AG04450 (cell line): ENCODE measurements at regions of chr17 and their contacts with region 1.

Region 1: DNA sequence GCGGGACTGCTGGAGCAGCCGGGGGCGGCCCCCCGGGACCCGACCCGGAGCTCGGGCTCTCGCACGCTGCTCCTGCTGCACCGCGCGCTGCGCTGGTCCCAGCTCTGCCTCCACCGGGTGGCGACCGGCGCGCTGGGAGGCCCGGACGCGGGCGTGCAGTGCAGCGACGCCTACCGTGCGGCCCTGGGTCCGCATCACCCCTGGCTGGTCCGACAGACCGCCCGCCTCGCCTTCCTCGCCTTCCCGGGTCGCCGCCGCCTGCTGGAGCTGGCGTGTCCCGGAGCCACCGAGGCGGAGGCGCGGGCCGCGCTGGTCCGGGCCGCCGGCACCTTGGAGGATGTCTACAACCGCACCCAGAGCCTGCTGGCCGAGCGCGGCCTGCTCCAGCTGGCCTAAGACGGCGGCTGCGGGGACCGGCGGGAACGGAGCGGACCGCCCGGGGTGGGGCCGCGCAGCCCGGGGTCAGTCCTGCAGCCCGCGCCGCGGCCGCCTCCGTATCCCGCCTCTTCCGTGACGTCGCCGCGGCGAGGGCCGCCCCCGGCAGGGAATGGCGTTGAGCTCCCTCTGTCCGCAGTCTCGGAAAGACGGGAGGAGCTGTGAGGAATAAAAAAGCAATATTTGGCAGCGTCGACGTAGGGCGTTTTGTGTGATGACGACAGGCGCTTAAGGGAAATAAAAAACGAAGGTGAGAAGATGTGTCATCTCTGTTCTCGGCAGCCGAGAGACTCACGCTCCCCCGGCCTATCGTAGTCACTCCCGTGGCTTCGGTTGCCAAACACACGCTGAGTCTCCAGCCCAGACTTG is 1.3 kb downstream of the GLTPD2 start:
- DNase-seq: peak; percentile 69
- H3K4me3 ChIP-seq: peak overlapping the region; percentile 66
- H3K27ac ChIP-seq: peak overlapping the region; percentile 75
- H3K27me3 ChIP-seq: peaks cover 17% of the 10 kb centered on the region
- CTCF ChIP-seq: peak; percentile 66

Region 2: DNA sequence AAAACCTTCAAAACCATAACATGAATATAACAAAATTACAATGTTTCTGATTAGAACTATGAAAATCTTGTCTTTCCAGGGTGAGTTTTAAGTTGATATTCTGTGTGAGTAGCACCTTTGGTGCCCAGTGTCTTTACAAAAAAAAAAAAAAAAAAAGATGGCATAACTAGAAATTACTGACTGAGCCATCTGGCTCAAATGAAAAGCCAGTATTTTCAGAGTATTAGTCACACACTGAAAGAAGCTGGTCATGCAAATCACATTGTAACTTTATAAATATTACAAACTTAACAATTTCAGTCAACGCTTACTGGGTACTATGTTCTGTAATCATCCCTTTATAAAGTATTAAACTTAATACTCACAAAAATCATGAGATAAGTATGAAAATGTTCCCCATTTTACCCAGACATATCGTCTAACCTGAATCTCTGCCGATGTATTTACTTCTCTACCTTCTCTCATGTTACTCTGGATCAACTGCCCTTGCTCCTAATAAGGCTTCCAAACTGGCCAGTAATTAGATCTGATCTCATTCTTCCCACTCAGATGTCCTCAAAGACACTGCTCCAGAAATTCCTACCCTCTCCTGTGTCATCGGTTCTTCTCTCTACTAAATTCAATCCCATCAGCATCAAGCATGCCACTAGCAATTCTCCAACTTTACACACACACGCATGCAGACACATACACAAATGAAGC is 449.0 kb before region 1 on chr17:
- CTCF ChIA-PET with region 1: no interaction called
- POLR2A ChIA-PET with region 1: no interaction called
- DNase-seq: no peak
- H3K4me3 ChIP-seq: no peak overlapping the region
- H3K27ac ChIP-seq: no peak overlapping the region
- H3K27me3 ChIP-seq: no peaks in the 10 kb centered on the region
- CTCF ChIP-seq: no peak

Region 3: DNA sequence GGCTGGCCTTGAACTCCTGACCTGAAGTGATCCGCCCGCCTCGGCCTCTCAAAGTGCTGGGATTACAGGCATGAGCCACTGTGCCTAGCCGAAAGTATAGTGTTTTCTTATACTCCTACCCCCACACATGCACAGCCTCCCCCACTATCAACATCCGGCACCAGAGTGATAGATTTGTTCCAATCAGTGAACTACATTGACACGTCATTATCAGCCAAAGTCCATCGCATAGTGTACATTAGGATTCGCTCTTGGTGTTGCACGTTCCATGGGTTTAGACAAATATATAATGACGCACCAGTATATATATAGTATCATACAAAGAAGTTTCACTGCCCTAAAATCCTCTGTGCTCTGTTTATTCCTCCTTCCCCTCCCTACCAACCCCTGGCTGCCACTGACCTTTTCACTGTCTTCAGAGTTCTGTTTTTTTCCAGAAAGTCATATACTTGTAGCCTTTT is 30.3 kb before region 1 on chr17:
- CTCF ChIA-PET with region 1: interaction called, 11 read pairs
- POLR2A ChIA-PET with region 1: no interaction called
- DNase-seq: no peak
- H3K4me3 ChIP-seq: no peak overlapping the region
- H3K27ac ChIP-seq: no peak overlapping the region
- H3K27me3 ChIP-seq: peaks cover 22% of the 10 kb centered on the region
- CTCF ChIP-seq: no peak

Region 4: GRCh38 chr17:4777969-4778761 is 11.9 kb before region 1 on chr17:
- CTCF ChIA-PET with region 1: interaction called, 24 read pairs
- POLR2A ChIA-PET with region 1: interaction called, 4 read pairs
- DNase-seq: no peak
- H3K4me3 ChIP-seq: no peak overlapping the region
- H3K27ac ChIP-seq: no peak overlapping the region
- H3K27me3 ChIP-seq: peaks cover 48% of the 10 kb centered on the region
- CTCF ChIP-seq: no peak

Region 5: GRCh38 chr17:4870855-4871254 is 80.8 kb after region 1 on chr17:
- CTCF ChIA-PET with region 1: interaction called, 10 read pairs
- POLR2A ChIA-PET with region 1: no interaction called
- DNase-seq: no peak
- H3K4me3 ChIP-seq: no peak overlapping the region
- H3K27ac ChIP-seq: no peak overlapping the region
- H3K27me3 ChIP-seq: no peaks in the 10 kb centered on the region
- CTCF ChIP-seq: no peak

Region 6: GRCh38 chr17:4891411-4892342 is 101.6 kb after region 1 on chr17:
- CTCF ChIA-PET with region 1: interaction called, 46 read pairs
- POLR2A ChIA-PET with region 1: no interaction called
- DNase-seq: no peak
- H3K4me3 ChIP-seq: no peak overlapping the region
- H3K27ac ChIP-seq: no peak overlapping the region
- H3K27me3 ChIP-seq: no peaks in the 10 kb centered on the region
- CTCF ChIP-seq: no peak

Region 7: DNA sequence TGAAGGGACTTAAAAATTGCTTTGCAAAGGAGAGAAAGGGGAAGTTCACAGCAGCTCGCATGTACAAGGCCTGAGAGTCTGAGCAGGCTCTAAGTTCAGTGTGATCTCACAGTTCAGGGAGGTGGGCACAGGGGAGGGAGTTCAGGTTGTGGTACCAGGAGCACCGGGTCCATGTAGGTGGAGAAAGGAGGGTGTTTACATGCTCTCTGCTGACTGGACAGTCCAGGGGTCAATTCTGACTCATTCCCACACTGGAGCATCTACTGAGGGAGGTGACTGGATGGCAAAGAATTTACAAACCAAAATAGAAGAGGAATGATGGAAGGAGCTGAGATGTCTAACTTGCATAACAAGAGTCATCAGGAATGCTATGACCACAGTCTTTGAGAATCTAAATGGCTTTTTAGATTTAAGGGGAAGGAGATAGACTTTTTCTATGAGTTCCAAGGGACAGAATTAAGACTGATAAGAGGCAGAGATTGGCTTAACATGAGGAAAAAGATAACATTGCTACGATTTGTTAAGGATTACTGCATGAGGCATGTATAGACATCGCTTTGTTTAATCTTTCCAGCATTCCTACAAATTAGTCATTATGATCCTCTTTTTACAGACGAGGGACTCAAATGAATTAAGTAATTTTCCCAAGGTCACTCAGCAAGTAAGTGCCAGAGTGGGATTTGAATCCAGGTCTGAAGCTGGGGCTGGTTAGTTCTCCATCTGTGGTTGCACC is 726.1 kb after region 1 on chr17:
- CTCF ChIA-PET with region 1: no interaction called
- POLR2A ChIA-PET with region 1: no interaction called
- DNase-seq: peak; percentile 97
- H3K4me3 ChIP-seq: no peak overlapping the region
- H3K27ac ChIP-seq: peak overlapping the region; percentile 95
- H3K27me3 ChIP-seq: no peaks in the 10 kb centered on the region
- CTCF ChIP-seq: no peak